ENCODE measurements at regions of chr6 and their contacts with region 1.

Region 1: DNA sequence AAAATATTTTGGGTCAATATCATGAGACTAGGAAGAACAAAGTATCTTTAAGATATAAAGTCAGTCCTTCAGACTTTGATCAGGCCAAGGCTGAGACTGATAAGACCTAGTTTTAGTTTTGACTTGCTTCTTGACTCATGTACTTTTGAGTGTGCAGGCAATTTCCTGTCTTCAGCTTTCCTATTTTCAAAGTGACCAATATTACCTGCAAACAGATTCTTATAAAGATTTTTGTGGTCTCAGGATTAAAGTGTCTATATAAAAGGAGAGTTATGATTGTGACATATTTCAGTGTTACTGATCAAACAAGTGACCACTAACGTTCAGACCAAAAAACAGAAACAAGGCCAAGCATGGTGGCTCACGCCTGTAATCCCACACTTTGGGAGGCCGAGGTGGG is 36.0 kb upstream of the AKIRIN2 start:
- DNase-seq: no peak
- H3K4me3 Mint-ChIP-seq: no peak overlapping the region
- H3K27ac Mint-ChIP-seq: no peak overlapping the region
- H3K4me1 Mint-ChIP-seq: peaks cover 31% of the 10 kb centered on the region
- H3K27me3 Mint-ChIP-seq: no peaks in the 10 kb centered on the region

Region 2: GRCh38 chr6:87723170-87724078 is 14.6 kb before region 1 on chr6:
- intact Hi-C with region 1: loop called (anchors 2 kb)
- DNase-seq: no peak
- H3K4me3 Mint-ChIP-seq: no peak overlapping the region
- H3K27ac Mint-ChIP-seq: no peak overlapping the region
- H3K4me1 Mint-ChIP-seq: peaks cover 26% of the 10 kb centered on the region
- H3K27me3 Mint-ChIP-seq: peaks cover 3% of the 10 kb centered on the region

Region 3: GRCh38 chr6:87772597-87773530 is 34.9 kb after region 1 on chr6:
- intact Hi-C with region 1: no loop called
- DNase-seq: no peak
- H3K4me3 Mint-ChIP-seq: no peak overlapping the region
- H3K27ac Mint-ChIP-seq: no peak overlapping the region
- H3K4me1 Mint-ChIP-seq: peaks cover 2% of the 10 kb centered on the region
- H3K27me3 Mint-ChIP-seq: peaks cover 8% of the 10 kb centered on the region

Region 4: GRCh38 chr6:87808005-87808757 is 70.2 kb after region 1 on chr6:
- intact Hi-C with region 1: loop called (anchors 2 kb)
- DNase-seq: no peak
- H3K4me3 Mint-ChIP-seq: no peak overlapping the region
- H3K27ac Mint-ChIP-seq: no peak overlapping the region
- H3K4me1 Mint-ChIP-seq: peaks cover 11% of the 10 kb centered on the region
- H3K27me3 Mint-ChIP-seq: peaks cover 10% of the 10 kb centered on the region

Measured in activated T-helper 2 cell treated with anti-CD3 and anti-CD28 coated beads, Interferon-gamma antibody, Interleukin-2, Interleukin-4, amounts not matched to agents 10 μg/mL and 5 μg/mL and 100 μg/mL, durations not matched to agents 14 hours and 24 hours and 36 hours (primary cell).